ENCODE measurements at regions of chr2 and their contacts with region 1.

Region 1: GRCh38 chr2:201363857-201364560 is 6.9 kb upstream of the FLACC1 start:
- DNase-seq: no peak
- H3K4me3 ChIP-seq: no peak overlapping the region
- H3K27ac ChIP-seq: no peak overlapping the region
- H3K4me1 ChIP-seq: peaks cover 0 to 7% (median 0%) of the 10 kb centered on the region in 4 donors
- H3K27me3 ChIP-seq: no peaks in the 10 kb centered on the region
- CTCF ChIP-seq: peak; percentile 75 to 86

Region 2: DNA sequence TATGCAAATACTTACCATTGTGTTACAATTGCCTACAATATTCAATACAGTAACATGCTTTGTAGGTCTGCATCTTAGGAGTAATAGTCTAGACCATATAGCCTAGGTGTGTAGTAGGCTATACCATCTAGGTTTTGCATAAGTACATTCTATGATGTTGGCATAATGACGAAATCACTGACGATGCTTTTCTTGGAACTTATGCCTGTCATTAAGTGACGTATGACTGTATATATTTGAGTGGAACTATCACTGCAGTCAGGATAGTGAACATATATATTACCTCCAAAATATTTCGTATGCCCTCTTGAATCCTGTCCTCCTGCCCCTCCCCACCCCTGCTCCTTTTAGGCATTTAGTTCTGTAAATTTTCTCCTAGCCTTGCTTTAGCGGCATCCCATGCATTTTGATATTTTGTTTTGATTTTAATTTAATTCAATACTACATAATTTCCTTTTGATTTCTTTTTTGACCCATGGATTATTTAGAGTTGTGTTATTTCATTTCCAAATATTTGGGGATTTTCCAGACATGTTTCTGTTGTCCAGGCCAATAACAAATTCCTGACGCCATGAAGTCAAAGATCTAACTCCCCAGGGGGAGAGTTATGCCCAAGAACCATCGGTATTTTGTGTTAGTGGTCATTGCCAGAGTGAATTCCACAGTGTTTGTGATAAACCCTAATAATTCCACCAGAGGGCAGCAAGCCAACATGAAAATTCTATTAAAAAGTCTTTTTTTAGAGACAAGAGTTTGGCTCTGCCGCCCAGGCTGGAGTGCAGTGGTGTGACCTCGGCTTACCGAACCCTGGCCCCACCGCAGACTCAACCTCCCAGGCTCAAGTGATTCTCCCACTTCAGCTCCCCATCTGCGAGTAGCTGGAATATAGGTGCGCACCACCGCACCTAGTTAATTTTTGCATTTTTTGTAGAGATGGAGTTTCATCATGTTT is 127.9 kb before region 1 on chr2:
- intact Hi-C with region 1: loop called (anchors 5 kb)
- DNase-seq: peak; percentile 63 to 75
- H3K4me3 ChIP-seq: peak overlapping the region; percentile 9 to 25
- H3K27ac ChIP-seq: peak overlapping the region; percentile 23 to 50
- H3K4me1 ChIP-seq: peaks cover 0 to 33% (median 13%) of the 10 kb centered on the region in 4 donors
- H3K27me3 ChIP-seq: no peaks in the 10 kb centered on the region
- CTCF ChIP-seq: peak; percentile 62 to 76

Region 3: DNA sequence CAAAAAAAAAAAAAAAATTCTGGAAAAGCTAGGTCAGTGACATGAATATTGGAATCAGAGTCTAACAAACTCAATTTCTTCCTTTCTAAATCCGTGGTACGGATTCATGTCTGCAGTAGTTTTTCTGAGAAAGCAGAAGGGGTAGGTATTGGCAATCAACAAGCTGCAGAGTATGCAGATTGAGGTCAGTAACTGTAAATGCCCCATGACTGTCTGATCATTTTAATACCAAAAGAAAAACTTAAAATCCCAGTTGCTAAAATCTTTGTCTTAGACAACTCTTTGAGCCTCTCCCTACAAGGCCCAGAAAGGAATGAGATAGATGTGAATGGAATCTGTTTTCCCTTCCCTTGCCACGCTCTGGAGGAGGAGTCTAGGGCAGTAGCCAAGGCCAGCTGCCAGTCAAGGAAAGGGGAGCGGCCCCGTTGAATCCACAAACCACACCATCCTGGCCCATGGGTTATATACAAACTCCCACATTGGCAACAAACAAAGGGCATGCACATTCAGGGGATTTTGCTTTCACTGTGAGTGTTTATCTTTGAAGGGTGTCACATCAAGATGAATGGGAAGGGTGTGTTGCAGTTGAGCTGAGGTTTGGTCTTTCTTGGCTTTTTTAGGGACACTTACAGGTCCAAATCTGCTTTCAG is 109.8 kb before region 1 on chr2:
- intact Hi-C with region 1: loop called (anchors 5 kb)
- DNase-seq: no peak
- H3K4me3 ChIP-seq: no peak overlapping the region
- H3K27ac ChIP-seq: no peak overlapping the region
- H3K4me1 ChIP-seq: peaks cover 0 to 14% (median 8%) of the 10 kb centered on the region in 4 donors
- H3K27me3 ChIP-seq: no peaks in the 10 kb centered on the region
- CTCF ChIP-seq: no peak

Region 4: GRCh38 chr2:201866643-201867473 is 502.8 kb after region 1 on chr2:
- intact Hi-C with region 1: no loop called
- DNase-seq: no peak
- H3K4me3 ChIP-seq: no peak overlapping the region
- H3K27ac ChIP-seq: no peak overlapping the region
- H3K4me1 ChIP-seq: no peaks in the 10 kb centered on the region
- H3K27me3 ChIP-seq: no peaks in the 10 kb centered on the region
- CTCF ChIP-seq: no peak